Sciatic nerve (tissue), 2 donors: ENCODE measurements at regions of chr3 and their contacts with region 1.

Region 1: GRCh38 chr3:14434126-14434517 is 31.7 kb downstream of the SLC6A6 start:
- DNase-seq: no peak
- ATAC-seq: no peak

Region 2: DNA sequence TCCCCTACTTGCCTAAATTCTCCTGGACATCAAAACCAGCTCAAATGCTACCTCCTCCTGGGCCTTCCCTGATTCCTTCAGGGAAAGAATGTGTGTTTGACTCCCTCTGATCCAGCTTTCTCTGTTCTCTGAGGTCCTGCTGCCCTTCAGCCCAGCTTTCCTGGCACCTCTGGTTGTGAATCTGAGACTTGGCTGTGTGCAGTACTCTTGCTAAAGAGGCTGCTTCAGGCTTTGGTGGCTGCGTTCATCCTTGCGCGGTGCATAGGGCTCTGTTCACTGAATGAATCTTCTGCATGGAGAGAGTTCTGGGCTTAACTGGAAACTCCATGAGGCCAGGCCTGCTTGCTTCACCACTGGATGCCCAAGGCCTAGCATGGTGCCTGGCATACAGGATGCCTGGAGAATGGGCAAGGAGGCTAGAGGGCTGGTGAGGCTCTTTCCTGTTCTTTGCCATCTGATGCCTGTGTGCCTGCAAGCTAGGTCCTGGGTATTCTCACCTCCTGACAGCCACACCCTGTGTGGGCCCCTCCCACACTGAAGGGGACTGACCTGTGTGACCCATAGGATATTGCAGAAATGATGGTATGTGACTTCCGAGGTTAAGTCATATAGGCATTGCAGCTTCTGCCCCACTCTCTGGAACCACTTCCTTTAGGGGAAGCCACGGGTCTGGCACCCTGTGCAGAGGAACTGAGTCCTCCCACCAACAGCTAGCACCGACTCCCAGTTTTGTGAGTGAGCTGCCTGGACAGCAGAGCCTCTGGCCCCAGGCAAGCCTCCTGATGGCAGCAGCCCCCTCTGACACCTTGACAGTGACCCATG is 56.6 kb before region 1 on chr3:
- intact Hi-C with region 1: loop called (anchors 2 kb)
- DNase-seq: no peak
- ATAC-seq: peak; percentile 48

Region 3: GRCh38 chr3:14757153-14757700 is 323.1 kb after region 1 on chr3:
- intact Hi-C with region 1: no loop called
- DNase-seq: no peak
- ATAC-seq: no peak